GM10248 (cell line): ENCODE measurements at regions of chr5 and their contacts with region 1.

Region 1: DNA sequence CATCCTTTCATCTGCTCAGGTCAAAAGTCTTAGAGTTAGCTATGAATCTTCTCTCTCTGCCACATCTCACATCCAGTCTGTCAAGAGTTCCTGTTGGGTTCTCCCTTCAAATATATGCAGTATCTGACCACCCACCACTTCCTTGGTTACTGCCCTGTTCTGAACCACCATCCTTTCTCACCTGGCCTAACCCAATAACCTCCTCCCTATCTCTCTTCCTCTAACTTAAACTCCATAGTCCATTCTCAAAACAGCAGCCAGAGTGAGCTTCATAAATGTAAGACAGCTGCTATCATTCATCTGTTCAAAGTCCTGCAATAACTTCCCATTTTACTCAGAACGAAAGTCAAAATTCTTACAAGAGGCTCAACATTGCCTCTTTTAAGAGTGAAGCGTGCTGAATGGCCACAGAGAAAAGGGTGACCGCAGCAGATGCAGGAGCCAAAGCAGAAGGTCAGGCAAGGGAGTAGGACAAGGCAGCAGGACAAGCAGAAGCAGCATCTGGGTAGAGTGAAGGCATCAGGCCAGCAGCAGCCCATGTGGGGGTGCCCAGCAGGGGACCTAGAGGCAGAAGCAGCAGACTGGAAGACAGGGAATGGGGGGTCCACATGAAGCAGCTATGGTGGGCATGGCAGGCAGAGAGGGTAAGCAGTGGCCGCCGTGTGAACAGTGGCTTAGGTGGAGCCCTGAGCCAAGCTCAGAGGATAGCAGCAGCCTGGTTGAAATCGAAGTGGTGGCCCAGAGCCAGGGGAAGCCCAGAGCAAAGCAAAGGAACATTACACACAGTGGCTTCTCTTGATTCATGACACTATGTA is 39.3 kb upstream of the CDC42SE2 start:
- DNase-seq: peak; percentile 61
- CTCF ChIP-seq: no peak

Region 2: GRCh38 chr5:131258733-131259132 is 34.1 kb after region 1 on chr5:
- CTCF ChIA-PET with region 1: interaction called, 14 read pairs
- POLR2A ChIA-PET with region 1: interaction called, 4 read pairs
- DNase-seq: no peak
- CTCF ChIP-seq: no peak